Left ventricle myocardium inferior (tissue), 1 donor: ENCODE measurements at regions of chr3 and their contacts with region 1.

Region 1: GRCh38 chr3:181700168-181701087 is 11.3 kb upstream of the SOX2 start:
- DNase-seq: peak; percentile 40
- H3K4me3 ChIP-seq: peak overlapping the region; percentile 42
- H3K27ac ChIP-seq: no peak overlapping the region
- H3K4me1 ChIP-seq: peaks cover 27% of the 10 kb centered on the region
- H3K27me3 ChIP-seq: peaks cover 100% of the 10 kb centered on the region
- CTCF ChIP-seq: peak; percentile 86

Region 2: DNA sequence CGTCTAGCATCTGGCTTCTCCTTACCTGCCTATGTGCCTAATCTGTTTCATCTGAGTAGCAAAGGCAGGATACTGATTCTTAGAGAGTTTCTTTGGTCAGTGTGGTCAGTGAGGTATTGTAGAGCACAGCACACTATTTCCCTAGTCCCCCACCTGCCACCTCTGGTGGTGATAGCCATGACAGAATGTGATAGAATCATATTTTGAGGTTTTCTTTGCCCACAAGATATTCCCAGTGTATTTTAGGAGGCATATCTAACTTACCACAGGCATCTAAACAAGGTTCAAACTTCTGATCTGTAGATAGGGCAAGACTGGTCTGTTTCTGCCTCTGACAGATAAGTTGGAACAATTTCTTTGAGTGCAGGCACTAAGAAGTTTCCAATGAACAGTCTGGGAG is 199.3 kb after region 1 on chr3:
- intact Hi-C with region 1: no loop called
- DNase-seq: no peak
- H3K4me3 ChIP-seq: no peak overlapping the region
- H3K27ac ChIP-seq: no peak overlapping the region
- H3K4me1 ChIP-seq: no peaks in the 10 kb centered on the region
- H3K27me3 ChIP-seq: peaks cover 6% of the 10 kb centered on the region
- CTCF ChIP-seq: no peak

Region 3: GRCh38 chr3:182058488-182058887 is 358.1 kb after region 1 on chr3:
- intact Hi-C with region 1: no loop called
- DNase-seq: no peak
- H3K4me3 ChIP-seq: no peak overlapping the region
- H3K27ac ChIP-seq: no peak overlapping the region
- H3K4me1 ChIP-seq: no peaks in the 10 kb centered on the region
- H3K27me3 ChIP-seq: no peaks in the 10 kb centered on the region
- CTCF ChIP-seq: no peak

Region 4: DNA sequence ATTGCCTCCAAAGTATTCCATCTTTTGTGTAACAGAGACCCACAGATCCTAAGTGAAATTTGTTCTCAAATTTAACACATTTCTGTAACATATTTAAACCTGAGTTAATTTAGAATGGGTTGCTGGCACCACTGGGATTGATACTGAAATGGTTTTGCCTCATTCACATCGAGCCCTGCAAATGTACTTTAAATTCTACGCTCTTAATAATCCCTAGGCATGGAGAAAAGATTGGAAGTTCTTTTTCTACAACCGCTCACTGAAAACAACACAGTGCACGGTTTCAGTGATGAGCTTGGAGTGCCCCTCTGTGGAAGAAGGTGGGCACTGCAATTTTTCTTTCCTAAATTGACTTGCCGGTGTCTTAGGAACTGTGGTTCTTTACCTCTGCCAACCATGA is 983.0 kb after region 1 on chr3:
- intact Hi-C with region 1: loop called (anchors 10 kb)
- DNase-seq: peak; percentile 19
- H3K4me3 ChIP-seq: peak overlapping the region; percentile 71
- H3K27ac ChIP-seq: no peak overlapping the region
- H3K4me1 ChIP-seq: peaks cover 16% of the 10 kb centered on the region
- H3K27me3 ChIP-seq: peaks cover 53% of the 10 kb centered on the region
- CTCF ChIP-seq: peak; percentile 91